Sciatic nerve (tissue), 2 donors: ENCODE measurements at regions of chr22 and their contacts with region 1.

Region 1: GRCh38 chr22:23938328-23939016 is 22.5 kb downstream of the GSTT2B start:
- DNase-seq: no peak
- ATAC-seq: no peak

Region 2: DNA sequence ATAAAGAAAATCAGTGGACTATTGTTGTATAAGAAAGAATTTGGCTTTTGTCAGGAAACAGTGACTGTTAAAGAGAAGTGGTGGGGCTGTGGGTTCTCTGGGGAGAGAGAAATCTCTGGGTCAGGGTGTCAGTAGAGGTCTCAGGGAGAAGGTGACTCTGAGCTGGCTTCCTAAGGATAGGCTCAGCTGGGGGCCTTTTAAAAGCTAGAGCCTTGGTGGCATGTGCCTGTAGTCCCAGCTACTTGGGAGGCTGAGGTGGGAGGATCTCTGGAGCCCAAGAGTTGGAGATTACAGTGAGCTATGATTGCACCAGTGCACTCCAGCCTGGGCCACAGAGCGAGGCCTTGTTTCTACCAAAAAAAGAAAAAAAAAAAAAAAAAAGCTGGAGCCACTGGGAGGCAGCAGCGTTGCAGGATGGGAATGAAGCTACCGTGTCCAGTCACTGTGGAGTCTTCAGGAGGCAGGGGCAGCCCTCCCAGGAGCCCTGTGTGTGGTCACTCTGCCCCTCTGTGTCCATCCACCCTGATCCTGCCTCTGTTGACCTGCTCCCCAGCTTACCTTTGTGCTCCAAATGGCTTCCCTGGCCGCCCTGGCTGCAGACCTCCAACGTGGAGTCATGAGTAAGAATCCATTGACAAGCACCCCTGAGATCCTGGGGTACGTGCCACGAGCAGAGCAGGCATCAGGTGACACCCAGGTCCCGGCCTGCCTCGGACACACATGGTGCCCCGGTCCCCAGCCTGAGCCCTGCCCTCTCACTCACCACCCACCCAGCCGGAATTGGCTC is 49.7 kb before region 1 on chr22:
- intact Hi-C with region 1: no loop called
- DNase-seq: no peak
- ATAC-seq: peak; percentile 24

Region 3: GRCh38 chr22:24005201-24005600 is 66.7 kb after region 1 on chr22 and contains the start of gene GSTT4:
- intact Hi-C with region 1: loop called (anchors 2 kb)
- DNase-seq: no peak
- ATAC-seq: peak; percentile 43
- total RNA-seq, gene GSTT4: not detected

Region 4: DNA sequence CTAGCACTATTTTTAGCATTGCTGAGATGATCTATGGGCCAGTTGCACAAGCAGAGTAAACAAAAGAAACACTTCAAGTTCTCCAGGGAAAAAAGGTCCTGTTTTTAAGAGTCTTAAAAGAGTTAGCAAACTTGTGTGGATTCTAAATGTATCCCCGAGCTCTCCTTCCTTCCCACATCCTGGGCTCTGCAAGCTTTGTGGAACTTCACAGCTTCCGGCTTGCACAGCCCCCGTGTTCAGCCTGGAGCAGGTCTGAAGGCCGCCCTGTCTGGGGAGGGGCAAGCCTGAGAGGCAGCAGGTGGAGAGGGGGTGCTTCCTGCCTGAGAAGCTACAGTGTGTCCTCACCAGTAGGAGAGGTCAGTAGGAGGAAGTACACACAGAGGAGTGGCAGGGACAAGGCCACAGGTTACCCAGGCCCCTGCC is 207.7 kb after region 1 on chr22:
- intact Hi-C with region 1: no loop called
- DNase-seq: no peak
- ATAC-seq: peak; percentile 70